ENCODE measurements at regions of chr2 and their contacts with region 1.

Region 1: GRCh38 chr2:64653349-64654062 is at the start of gene SERTAD2:
- DNase-seq: peak; percentile 96
- H3K4me3 ChIP-seq: peak within 1 kb of the TSS; percentile 72 to 97 (median 86)
- H3K27ac ChIP-seq: peak within 1 kb of the TSS; percentile 97 to 100 (median 100)
- H3K4me1 ChIP-seq: peaks cover 0 to 49% (median 35%) of the 10 kb centered on the region in 4 donors
- H3K27me3 ChIP-seq: no peaks in the 10 kb centered on the region
- CTCF ChIP-seq: no peak
- EP300 ChIP-seq: peak in 1 of 4 donors; percentile 7
- POLR2A ChIP-seq: peak; percentile 76 to 79
- total RNA-seq, gene SERTAD2: 7.2 to 14.3 (median 10.5) TPM

Region 2: DNA sequence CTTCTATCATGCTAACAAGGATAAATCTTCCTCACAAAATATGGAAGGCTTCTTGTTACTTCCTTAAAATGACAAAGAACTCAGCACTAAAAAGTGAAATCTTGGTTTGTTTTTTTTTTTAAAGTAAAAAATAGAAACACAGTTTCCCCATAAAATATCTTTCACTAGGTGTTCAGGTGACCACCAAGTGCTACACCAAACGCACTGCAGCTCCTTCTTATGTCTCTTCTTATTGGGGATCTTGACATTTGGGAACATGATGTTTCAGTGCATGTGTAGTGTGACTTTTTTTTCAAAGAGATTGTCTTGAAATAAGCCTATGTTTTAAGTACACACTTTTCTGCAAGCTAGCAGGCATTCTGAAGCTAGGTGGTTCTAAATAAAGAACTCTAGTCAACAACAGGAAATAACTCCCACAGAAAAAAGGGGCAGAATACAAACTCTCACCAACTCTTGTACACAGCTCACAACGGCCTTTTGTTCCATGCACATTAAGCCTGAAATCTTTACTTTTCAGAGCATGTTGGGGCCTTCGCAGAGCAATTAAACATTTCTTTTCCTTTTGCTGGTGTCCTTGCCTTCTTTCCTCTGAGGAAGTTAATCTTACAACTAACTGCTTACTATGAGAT is 13.4 kb after region 1 on chr2:
- intact Hi-C with region 1: no loop called
- DNase-seq: no peak
- H3K4me3 ChIP-seq: no peak overlapping the region
- H3K27ac ChIP-seq: no peak overlapping the region
- H3K4me1 ChIP-seq: no peaks in the 10 kb centered on the region
- H3K27me3 ChIP-seq: no peaks in the 10 kb centered on the region
- CTCF ChIP-seq: no peak
- EP300 ChIP-seq: no peak
- POLR2A ChIP-seq: no peak

Region 3: GRCh38 chr2:64730551-64731262 is 77.2 kb after region 1 on chr2:
- intact Hi-C with region 1: loop called (anchors 5 kb)
- DNase-seq: peak; percentile 89
- H3K4me3 ChIP-seq: peak overlapping the region; percentile 22 to 47 (median 38)
- H3K27ac ChIP-seq: peak overlapping the region; percentile 56 to 77 (median 70)
- H3K4me1 ChIP-seq: peaks cover 0 to 32% (median 29%) of the 10 kb centered on the region in 4 donors
- H3K27me3 ChIP-seq: no peaks in the 10 kb centered on the region
- CTCF ChIP-seq: no peak
- EP300 ChIP-seq: no peak
- POLR2A ChIP-seq: no peak

Region 4: DNA sequence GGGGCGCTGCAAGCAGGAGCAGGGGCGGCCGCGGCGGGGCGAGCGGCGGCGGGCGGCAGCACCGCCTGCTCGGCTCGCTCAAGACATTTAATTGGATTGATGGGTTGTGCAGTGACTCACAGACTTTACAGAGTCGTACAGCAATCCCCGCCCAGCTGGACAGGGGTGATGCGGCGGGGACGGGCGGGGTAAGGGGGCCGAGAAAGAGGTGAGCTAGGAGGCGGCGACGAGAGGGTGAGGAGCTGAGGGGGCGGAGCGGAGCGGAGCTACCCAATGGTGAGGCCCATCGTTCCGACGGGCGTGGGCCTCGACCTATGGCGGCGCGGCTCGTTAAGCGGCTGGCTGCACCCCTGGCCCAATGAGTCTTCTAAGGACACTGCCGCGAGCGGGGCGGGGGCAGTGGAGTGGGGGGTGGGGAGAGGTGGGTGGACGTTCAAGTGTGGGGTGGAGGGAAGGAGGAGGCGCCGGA is 97.3 kb after region 1 on chr2:
- intact Hi-C with region 1: loop called (anchors 1 kb)
- DNase-seq: peak; percentile 100
- H3K4me3 ChIP-seq: peak overlapping the region; percentile 67 to 78 (median 72)
- H3K27ac ChIP-seq: peak overlapping the region; percentile 94 to 98 (median 98)
- H3K4me1 ChIP-seq: peaks cover 0 to 26% (median 14%) of the 10 kb centered on the region in 4 donors
- H3K27me3 ChIP-seq: no peaks in the 10 kb centered on the region
- CTCF ChIP-seq: no peak
- EP300 ChIP-seq: peak in 2 of 4 donors; percentile 3 to 15
- POLR2A ChIP-seq: peak; percentile 98 to 99

Region 5: GRCh38 chr2:64767670-64768468 is 114.4 kb after region 1 on chr2:
- intact Hi-C with region 1: loop called (anchors 2 kb)
- DNase-seq: peak; percentile 97
- H3K4me3 ChIP-seq: peak overlapping the region; percentile 60 to 69 (median 65)
- H3K27ac ChIP-seq: peak overlapping the region; percentile 92 to 98 (median 96)
- H3K4me1 ChIP-seq: peaks cover 0 to 58% (median 27%) of the 10 kb centered on the region in 4 donors
- H3K27me3 ChIP-seq: no peaks in the 10 kb centered on the region
- CTCF ChIP-seq: no peak
- EP300 ChIP-seq: peak in 2 of 4 donors; percentile 6 to 21
- POLR2A ChIP-seq: peak; percentile 88 to 90

Region 6: GRCh38 chr2:64859312-64860212 is 206.1 kb after region 1 on chr2:
- intact Hi-C with region 1: loop called (anchors 2 kb)
- DNase-seq: peak; percentile 97
- H3K4me3 ChIP-seq: peak overlapping the region; percentile 26 to 57 (median 48)
- H3K27ac ChIP-seq: peak overlapping the region; percentile 91 to 97 (median 96)
- H3K4me1 ChIP-seq: peaks cover 0 to 47% (median 40%) of the 10 kb centered on the region in 4 donors
- H3K27me3 ChIP-seq: no peaks in the 10 kb centered on the region
- CTCF ChIP-seq: peak in 1 of 4 experiments; percentile 23
- EP300 ChIP-seq: peak in 1 of 4 donors; percentile 20
- POLR2A ChIP-seq: peak in 1 of 2 donors; percentile 23

Region 7: GRCh38 chr2:64865073-64865830 is 211.7 kb after region 1 on chr2:
- intact Hi-C with region 1: loop called (anchors 1 kb)
- DNase-seq: peak; percentile 84
- H3K4me3 ChIP-seq: peak overlapping the region; percentile 60 to 67 (median 64)
- H3K27ac ChIP-seq: peak overlapping the region; percentile 86 to 93 (median 90)
- H3K4me1 ChIP-seq: peaks cover 0 to 20% (median 15%) of the 10 kb centered on the region in 4 donors
- H3K27me3 ChIP-seq: no peaks in the 10 kb centered on the region
- CTCF ChIP-seq: peak in 2 of 4 experiments; percentile 24 to 67
- EP300 ChIP-seq: no peak
- POLR2A ChIP-seq: no peak

Region 8: DNA sequence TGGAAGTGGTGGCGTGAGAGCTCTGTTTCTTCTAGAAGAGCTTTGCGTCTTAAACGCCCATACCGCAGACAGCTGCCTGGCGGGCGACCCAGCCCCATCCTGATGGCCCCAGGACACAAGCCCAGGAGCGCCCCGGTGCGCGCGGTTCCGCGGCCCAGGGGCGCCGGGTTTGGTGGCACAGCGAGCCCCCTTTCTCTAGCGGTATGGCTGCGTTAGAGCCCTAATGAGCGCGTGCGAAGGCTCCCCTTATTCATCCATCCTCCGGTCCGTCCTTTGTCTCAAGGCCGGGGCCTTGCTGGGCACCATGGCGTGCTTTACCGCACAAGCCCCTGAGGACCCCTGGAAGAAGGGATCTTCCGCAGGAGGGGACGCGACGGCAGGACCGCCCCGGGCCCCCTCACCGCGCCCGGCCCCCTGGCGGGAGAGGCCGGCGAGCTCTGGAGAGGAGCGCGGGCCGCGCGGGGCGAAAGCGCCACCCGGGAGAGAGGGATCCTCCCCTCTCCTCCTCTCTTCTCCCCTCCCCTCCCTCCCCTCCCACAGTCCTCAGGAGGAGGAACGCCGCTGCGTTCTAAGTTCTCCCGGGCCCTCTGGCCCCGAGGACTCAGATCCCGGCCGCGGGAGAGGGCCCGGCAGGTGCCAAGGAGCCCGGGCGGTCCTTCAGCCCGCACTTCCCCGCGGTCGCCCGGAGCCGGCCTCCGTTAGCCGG is 335.1 kb after region 1 on chr2:
- intact Hi-C with region 1: loop called (anchors 5 kb)
- DNase-seq: peak; percentile 88
- H3K4me3 ChIP-seq: peak overlapping the region; percentile 52 to 92 (median 82)
- H3K27ac ChIP-seq: peak overlapping the region; percentile 92 to 100 (median 98)
- H3K4me1 ChIP-seq: peaks cover 0 to 32% (median 25%) of the 10 kb centered on the region in 4 donors
- H3K27me3 ChIP-seq: no peaks in the 10 kb centered on the region
- CTCF ChIP-seq: peak; percentile 36 to 68 (median 56)
- EP300 ChIP-seq: no peak
- POLR2A ChIP-seq: peak; percentile 36 to 51